Endothelial cell of umbilical vein (primary cell): ENCODE measurements at regions of chr7 and their contacts with region 1.

Region 1: GRCh38 chr7:99040104-99040958 is 103.6 kb downstream of the SMURF1 start:
- DNase-seq: peak; percentile 89
- H3K4me3 ChIP-seq: no peak overlapping the region
- H3K27ac ChIP-seq: peak overlapping the region; percentile 61
- H3K4me1 ChIP-seq: peaks cover 37% of the 10 kb centered on the region
- H3K27me3 ChIP-seq: no peaks in the 10 kb centered on the region
- CTCF ChIP-seq: peak; percentile 74
- POLR2A ChIP-seq: no peak

Region 2: DNA sequence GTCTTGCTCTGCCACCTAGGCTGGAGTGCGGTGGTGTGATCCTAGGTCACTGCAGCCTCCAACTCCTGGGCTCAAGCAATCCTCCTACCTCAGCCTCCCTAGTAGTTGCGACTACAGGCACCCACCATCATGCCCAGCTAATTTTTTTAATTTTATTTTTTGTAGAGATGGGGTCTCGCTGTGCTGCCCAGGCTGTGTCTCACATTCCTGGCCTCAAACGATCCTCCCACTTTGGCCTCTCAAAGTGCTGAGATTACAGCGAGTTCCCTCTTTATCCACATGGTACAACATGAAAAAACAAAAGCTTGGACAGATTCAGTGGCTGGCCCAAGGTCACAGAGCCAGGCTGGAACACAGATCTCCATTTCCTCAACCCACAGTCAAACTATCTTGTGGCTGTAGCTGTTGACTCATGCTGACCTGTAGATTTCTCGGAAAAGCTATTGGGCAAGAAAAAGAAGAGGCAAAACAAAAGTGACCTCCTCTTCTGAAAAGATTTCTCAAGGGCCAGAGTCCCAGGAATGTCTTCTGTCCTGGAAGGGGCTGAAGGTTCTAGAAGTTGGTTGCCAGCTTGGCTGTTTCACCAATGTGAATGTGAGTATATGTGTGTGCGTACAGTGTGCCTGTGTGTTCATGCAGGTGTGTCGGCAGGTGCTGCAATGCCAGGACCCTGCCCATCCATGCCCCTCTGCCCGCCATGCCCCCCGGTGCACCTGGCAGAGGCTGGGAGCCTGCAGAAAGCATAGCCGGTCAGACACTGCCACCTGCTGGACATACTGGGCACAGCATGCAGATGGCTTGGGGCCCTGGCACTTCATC is 198.9 kb before region 1 on chr7:
- CTCF ChIA-PET with region 1: no interaction called
- POLR2A ChIA-PET with region 1: no interaction called
- dilution Hi-C with region 1: no loop called
- intact Hi-C with region 1: no loop called
- DNase-seq: peak; percentile 56
- H3K4me3 ChIP-seq: no peak overlapping the region
- H3K27ac ChIP-seq: no peak overlapping the region
- H3K4me1 ChIP-seq: no peaks in the 10 kb centered on the region
- H3K27me3 ChIP-seq: no peaks in the 10 kb centered on the region
- CTCF ChIP-seq: peak; percentile 93 to 99
- POLR2A ChIP-seq: no peak

Region 3: GRCh38 chr7:98993024-98993897 is 47.1 kb before region 1 on chr7:
- CTCF ChIA-PET with region 1: no interaction called
- POLR2A ChIA-PET with region 1: no interaction called
- dilution Hi-C with region 1: no loop called
- intact Hi-C with region 1: no loop called
- DNase-seq: no peak
- H3K4me3 ChIP-seq: no peak overlapping the region
- H3K27ac ChIP-seq: no peak overlapping the region
- H3K4me1 ChIP-seq: no peaks in the 10 kb centered on the region
- H3K27me3 ChIP-seq: no peaks in the 10 kb centered on the region
- CTCF ChIP-seq: peak in 1 of 2 donors; percentile 7
- POLR2A ChIP-seq: no peak

Region 4: DNA sequence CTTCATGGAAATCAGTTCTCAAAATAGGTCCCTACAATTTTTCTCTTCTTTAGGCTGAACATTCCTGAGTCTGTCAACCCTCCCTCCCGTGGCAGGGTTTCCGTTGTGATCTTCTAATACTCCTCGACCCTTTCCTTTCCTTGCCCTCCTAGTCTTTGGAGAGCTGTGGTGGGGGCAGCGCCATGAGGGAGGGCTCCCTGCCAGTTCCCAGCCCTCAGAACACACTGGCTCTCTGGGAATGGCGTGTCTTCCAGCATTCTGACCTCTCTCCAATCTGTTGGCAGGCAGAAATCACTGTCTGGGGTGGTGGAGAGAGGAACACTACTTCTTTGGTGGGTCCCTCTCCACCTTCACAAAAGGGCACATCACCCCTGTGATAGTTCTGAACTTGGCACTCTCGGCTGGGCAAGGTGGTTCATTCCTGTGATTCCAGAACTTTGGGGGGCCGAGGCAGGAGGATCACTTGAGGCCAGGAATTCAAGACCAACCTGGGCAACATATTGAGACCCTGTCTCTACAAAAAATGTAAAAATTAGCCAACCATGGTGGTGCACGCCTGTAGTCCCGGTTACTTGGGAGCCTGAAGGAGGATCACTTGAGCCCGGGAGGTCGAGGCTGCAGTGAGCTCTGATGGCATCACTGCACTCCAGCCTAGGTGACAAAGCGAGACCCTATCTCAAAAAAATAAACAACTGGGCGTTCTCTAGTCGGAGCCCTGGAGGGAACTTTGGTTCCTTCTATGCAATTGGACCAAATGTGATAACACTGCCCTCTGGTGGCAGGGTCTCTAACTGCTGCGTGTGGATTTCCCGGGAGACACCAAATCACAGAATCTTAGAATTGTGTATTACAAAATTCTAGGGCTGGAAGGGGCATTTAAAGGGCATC is 272.2 kb after region 1 on chr7:
- CTCF ChIA-PET with region 1: interaction called, 44 read pairs
- POLR2A ChIA-PET with region 1: no interaction called
- dilution Hi-C with region 1: no loop called
- intact Hi-C with region 1: loop called (anchors 1 kb)
- DNase-seq: peak; percentile 59
- H3K4me3 ChIP-seq: no peak overlapping the region
- H3K27ac ChIP-seq: no peak overlapping the region
- H3K4me1 ChIP-seq: no peaks in the 10 kb centered on the region
- H3K27me3 ChIP-seq: no peaks in the 10 kb centered on the region
- CTCF ChIP-seq: peak; percentile 82 to 83
- POLR2A ChIP-seq: no peak

Region 5: DNA sequence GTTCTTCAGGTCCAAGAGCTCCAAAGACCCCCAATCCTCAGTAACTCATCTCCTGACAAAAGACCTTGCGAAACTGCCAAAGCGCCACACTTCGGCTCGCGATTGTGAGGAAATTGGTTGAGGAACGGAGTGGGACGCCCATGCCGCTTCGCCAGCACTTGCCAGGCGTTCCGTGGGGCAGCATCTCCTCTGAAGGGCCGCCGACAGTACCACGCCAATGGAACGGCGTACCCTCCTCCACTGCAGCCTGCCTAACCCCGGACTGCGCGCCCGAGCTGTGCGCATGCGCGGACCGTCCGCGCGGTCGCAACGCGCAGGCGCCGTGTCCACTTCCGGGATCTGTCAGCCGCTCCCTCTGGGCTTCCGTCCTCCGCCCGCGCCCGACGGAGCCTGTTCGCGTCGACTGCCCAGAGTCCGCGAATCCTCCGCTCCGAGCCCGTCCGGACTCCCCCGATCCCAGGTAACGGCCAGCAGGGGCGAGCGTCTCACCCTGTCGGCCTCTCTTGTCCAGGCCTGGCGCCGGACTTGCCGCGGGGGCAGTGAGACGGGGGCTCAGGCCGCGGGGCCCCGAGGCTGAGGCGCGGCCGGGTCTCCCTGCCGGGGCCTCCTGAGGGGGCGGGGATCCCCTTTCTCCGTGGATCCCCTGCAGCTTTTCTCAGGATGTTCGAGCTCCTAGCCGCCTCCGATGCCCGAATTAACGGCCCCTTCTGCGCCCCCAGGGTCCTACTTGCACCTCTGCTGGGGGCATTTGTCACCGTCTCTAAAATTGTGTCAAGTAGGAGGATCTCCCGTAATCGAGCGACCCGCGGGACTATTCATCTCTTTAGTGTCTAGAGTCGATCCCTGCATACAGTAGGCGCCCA is 285.4 kb after region 1 on chr7 and contains the start of gene ARPC1A:
- CTCF ChIA-PET with region 1: interaction called, 13 read pairs
- POLR2A ChIA-PET with region 1: no interaction called
- dilution Hi-C with region 1: no loop called
- intact Hi-C with region 1: loop called (anchors 1 kb)
- DNase-seq: peak; percentile 97
- H3K4me3 ChIP-seq: peak within 1 kb of the TSS; percentile 84 to 99 (median 94)
- H3K27ac ChIP-seq: peak within 1 kb of the TSS; percentile 76
- H3K4me1 ChIP-seq: peaks cover 42% of the 10 kb centered on the region
- H3K27me3 ChIP-seq: no peaks in the 10 kb centered on the region
- CTCF ChIP-seq: peak; percentile 15 to 41
- POLR2A ChIP-seq: peak; percentile 98
- total RNA-seq, gene ARPC1A: 243 TPM in 2 replicates

Region 6: GRCh38 chr7:99331002-99331401 is 290.7 kb after region 1 on chr7:
- CTCF ChIA-PET with region 1: interaction called, 13 read pairs
- POLR2A ChIA-PET with region 1: no interaction called
- dilution Hi-C with region 1: no loop called
- intact Hi-C with region 1: loop called (anchors 1 kb)
- DNase-seq: no peak
- H3K4me3 ChIP-seq: no peak overlapping the region
- H3K27ac ChIP-seq: peak overlapping the region; percentile 66
- H3K4me1 ChIP-seq: peaks cover 34% of the 10 kb centered on the region
- H3K27me3 ChIP-seq: no peaks in the 10 kb centered on the region
- CTCF ChIP-seq: no peak
- POLR2A ChIP-seq: no peak